AG04449 (cell line): ENCODE measurements at regions of chr17 and their contacts with region 1.

Region 1: GRCh38 chr17:28494445-28495188 is 11.5 kb upstream of the FOXN1 start:
- DNase-seq: no peak
- H3K4me3 ChIP-seq: no peak overlapping the region
- CTCF ChIP-seq: peak; percentile 97

Region 2: GRCh38 chr17:28484296-28484695 is 10.3 kb before region 1 on chr17:
- CTCF ChIA-PET with region 1: interaction called, 33 read pairs
- POLR2A ChIA-PET with region 1: no interaction called
- DNase-seq: no peak
- H3K4me3 ChIP-seq: no peak overlapping the region
- CTCF ChIP-seq: no peak

Region 3: DNA sequence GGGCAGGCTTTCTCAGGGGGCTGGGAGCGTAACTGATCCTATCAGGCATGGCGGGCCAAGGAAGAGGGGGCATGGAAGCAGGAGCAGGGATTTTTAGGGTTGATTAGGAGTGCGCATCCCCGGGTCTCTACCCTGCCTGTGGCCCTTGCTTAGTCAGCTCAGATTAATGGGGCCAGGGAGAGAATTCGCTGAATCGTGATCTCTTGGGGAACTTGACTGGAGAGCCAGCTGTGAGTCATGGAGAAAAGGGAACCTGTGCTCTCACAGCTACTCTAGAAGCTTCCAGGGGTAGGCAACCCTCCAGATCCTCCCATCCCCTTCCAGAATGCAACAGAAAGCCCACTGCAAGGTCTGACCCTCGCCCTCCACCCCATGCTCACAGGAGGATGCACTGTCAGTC is 15.2 kb after region 1 on chr17:
- CTCF ChIA-PET with region 1: interaction called, 43 read pairs
- POLR2A ChIA-PET with region 1: no interaction called
- DNase-seq: no peak
- H3K4me3 ChIP-seq: no peak overlapping the region
- CTCF ChIP-seq: no peak

Region 4: DNA sequence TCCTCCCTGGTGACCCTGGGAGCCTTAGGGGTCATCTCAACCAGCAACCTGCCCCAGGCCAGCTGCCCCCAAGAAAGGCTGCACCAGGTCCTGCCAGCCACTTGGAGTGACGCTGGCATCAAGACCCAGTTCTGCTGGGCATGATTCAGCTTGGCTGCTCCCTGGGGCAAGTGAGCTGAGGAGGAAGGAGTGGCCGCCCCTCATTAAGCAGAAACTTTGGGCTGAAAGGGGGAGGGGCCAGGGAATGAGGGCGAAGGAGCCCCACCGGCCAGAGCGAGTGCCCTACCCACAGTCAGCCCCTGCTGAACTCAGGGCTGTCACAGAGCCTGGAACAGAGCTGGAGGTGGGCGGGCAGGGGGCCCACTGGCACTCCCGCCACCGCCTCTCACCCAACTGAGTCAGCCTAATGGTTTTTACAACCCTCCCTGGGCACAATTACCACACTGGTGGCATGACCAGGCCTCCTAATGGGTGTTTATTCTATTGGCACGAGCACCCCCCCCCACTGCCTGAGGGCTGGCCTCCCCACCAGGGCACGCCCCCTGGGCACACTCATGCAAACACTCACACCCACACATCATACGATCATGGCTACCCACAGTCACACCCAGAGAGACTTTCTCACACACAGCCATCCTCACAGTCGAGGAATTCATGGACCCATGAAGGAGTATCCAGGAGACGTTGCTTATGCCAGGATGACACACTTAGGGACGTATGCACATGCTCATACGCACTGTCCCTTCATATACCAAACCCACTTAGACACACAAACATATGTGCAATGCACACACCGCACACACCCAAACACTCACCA is 38.6 kb after region 1 on chr17:
- CTCF ChIA-PET with region 1: interaction called, 258 read pairs
- POLR2A ChIA-PET with region 1: no interaction called
- DNase-seq: no peak
- H3K4me3 ChIP-seq: no peak overlapping the region
- CTCF ChIP-seq: no peak

Region 5: DNA sequence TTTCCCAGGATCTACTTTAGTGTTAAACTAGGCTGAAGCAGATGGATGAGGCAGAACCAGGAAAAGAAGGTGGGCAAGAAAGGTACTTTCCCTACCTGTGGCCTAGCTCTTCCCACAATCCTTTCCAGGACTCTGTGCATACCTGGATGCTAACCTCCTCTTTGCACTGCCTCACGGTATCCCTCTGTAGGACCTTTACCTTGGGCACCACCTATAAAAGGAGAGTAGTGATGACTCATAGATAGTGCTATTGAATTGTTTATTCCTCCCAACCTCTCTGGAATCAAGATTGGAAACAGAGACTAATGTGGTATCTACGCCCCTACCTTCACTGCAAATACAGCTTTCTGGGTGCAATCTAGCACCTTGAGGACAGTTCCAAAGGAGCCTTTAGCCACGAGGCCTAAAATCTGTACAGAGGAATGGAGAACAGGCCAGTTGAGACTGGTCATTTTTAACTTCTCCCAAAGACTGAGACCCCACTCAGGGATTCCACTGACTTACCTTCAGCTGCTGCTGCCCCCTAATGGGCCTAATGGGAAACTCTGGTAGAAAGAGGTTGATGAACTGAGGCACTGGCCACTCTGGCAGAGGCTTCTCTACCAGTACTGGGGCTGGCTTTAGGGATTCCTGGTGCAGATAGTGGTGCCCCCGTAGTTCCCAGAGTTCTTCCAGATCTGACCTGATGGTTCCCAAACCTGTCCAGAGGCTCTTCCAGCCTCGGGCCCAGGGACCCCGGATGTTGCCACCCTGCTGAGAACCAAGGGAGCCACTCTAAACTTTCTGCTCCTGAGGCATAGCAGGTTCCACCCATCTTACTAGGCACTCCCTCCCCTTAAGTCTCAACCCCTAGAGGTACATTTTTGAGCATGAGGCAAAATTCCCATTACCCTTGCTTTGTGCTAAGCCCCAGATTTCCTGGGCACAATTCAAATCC is 118.6 kb after region 1 on chr17:
- CTCF ChIA-PET with region 1: interaction called, 31 read pairs
- POLR2A ChIA-PET with region 1: no interaction called
- DNase-seq: no peak
- H3K4me3 ChIP-seq: no peak overlapping the region
- CTCF ChIP-seq: peak; percentile 69

Region 6: DNA sequence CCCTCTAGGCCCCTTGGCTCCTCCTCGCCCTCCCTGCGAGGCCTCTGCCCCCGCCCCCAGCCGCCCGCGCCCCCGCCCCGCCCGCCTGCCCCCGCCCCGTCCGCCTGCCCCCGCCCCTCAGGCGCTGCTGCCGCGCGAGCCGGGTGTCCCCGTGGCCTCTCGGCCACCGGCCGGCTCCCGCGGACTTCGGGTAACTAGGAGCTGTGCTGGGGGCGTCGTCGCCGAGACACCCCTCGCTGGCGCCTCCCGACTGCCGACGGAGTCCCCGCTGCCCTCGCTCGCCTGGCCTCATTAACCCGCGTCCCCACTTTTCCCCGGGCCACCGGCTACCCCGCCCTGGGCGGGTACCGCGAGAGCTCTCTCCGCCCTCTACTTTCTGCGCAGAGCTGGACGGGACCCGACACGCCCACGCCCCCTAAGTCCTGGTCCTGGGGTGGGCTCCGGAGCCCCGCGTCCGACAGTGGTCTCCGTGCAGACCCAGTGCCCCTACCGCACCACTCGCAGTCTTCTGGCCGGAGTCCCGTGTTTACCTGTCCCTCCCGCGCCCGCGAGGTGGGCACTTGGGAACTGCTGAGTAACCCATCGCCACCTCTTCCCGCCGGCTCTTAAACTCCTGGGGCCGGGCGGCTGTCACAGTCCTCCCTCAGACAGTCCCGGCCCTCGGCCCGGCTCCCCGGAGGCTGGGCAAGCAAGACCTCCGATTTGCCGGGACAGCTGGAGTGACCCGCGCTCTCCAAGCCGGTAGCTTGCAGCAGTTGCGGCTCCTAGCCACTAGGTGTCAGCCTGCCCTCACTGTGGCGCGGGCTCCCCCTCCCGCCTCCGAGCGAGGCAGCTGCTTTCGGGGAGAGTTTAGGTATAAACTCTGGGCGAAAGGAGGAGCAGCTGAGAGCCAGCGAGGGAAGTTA is 231.9 kb after region 1 on chr17 and contains the start of gene TLCD1:
- CTCF ChIA-PET with region 1: no interaction called
- POLR2A ChIA-PET with region 1: no interaction called
- DNase-seq: no peak
- H3K4me3 ChIP-seq: peak within 1 kb of the TSS; percentile 72
- CTCF ChIP-seq: peak; percentile 100